ENCODE measurements at regions of chr4 and their contacts with region 1.

Region 1: GRCh38 chr4:82428969-82429727 is 1.1 kb downstream of the HNRNPDL start:
- DNase-seq: peak; percentile 70
- H3K4me3 ChIP-seq: peak overlapping the region; percentile 93
- H3K27ac ChIP-seq: peak overlapping the region; percentile 95
- H3K27me3 ChIP-seq: no peaks in the 10 kb centered on the region
- CTCF ChIP-seq: peak; percentile 67

Region 2: DNA sequence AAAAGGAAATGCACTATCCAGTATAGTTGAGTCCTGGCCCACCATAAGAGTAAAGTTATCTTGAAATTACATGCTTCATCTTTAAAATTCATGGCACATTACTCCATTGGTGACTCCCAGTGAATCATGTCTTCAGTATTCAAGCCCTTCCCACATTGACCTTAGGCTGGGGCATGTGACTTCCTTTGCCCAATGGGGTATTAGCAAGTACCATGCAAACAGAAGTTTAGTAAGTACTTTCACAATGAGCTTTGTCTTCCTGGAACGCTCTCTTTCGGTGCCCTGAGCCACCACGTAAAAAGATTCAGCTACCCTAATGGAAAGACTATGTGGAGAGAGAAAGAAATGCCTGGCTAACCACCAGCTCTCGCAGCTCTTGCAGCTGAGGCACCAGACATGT is 290.8 kb before region 1 on chr4:
- CTCF ChIA-PET with region 1: no interaction called
- POLR2A ChIA-PET with region 1: no interaction called
- DNase-seq: no peak
- H3K4me3 ChIP-seq: no peak overlapping the region
- H3K27ac ChIP-seq: no peak overlapping the region
- H3K27me3 ChIP-seq: no peaks in the 10 kb centered on the region
- CTCF ChIP-seq: no peak

Region 3: GRCh38 chr4:82360298-82361177 is 68.6 kb before region 1 on chr4:
- CTCF ChIA-PET with region 1: interaction called, 10 read pairs
- POLR2A ChIA-PET with region 1: interaction called, 8 read pairs
- DNase-seq: no peak
- H3K4me3 ChIP-seq: no peak overlapping the region
- H3K27ac ChIP-seq: no peak overlapping the region
- H3K27me3 ChIP-seq: no peaks in the 10 kb centered on the region
- CTCF ChIP-seq: peak; percentile 73

Region 4: DNA sequence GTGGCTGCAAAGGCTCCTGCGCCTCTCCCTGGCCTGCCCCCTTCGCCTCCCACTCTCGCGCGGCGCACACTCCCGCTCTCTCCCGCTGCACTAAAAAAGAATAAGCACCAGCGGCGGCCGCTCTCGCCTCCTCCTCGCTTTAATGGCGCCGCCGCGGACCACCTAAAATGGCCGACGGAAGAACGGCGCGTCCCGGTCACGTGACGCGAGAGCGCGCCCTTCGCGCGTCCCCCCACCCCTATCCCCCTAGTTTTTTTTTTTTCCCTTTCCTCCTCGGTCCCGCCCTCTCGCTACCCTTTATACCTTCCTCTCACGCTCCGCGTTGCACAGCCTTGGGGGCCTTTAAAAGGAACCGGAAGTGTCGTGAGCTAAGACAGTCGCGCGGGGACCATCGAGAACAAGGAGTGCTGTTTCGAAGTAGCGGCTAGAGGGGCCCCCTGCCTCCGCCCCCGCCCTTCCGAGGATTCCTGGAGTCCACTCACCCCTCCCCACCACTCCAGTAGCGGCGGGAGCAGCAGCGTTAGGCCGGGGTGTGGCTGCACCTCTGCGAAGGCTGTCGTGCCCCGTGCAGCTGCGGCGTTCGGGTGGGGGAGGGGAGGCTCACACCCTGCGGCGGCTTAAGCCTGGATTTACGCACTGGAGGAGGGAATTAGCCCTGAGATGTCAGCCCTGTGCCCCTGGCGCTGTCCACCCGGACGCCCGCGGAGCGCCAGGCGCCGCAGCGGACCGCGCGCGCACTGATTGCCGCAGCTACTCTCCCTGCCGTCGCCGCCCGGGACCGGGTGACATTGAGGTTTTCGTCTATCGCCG is 55.1 kb before region 1 on chr4 and contains the start of gene HNRNPD:
- CTCF ChIA-PET with region 1: interaction called, 8 read pairs
- POLR2A ChIA-PET with region 1: interaction called, 71 read pairs
- DNase-seq: peak; percentile 99
- H3K4me3 ChIP-seq: peak within 1 kb of the TSS; percentile 98
- H3K27ac ChIP-seq: peak within 1 kb of the TSS; percentile 97
- H3K27me3 ChIP-seq: no peaks in the 10 kb centered on the region
- CTCF ChIP-seq: no peak
- polyA plus RNA-seq, gene HNRNPD: 73.4 and 93.8 TPM in 2 replicates

Region 5: DNA sequence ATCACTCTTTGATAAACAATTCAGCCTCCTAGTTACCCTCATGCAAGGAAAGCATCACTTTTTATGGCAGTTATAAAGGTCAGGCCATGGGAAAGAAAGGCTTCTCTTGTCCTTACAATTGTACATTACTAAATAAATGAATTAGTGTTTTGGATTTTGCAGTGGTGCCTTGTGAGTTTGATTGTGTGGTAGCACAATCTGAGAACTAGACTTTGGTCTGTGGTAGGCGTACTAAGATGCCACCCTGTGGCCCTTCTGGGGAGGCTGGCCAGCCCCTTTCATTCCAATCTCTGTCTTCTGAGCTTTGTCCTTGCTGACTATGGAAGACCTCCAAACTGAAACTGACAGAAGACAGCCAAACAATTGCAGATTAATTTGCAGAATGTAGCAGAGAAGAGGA is 40.7 kb before region 1 on chr4:
- CTCF ChIA-PET with region 1: interaction called, 12 read pairs
- POLR2A ChIA-PET with region 1: interaction called, 4 read pairs
- DNase-seq: no peak
- H3K4me3 ChIP-seq: no peak overlapping the region
- H3K27ac ChIP-seq: no peak overlapping the region
- H3K27me3 ChIP-seq: no peaks in the 10 kb centered on the region
- CTCF ChIP-seq: no peak

Region 6: GRCh38 chr4:82998898-82999297 is 569.8 kb after region 1 on chr4:
- CTCF ChIA-PET with region 1: no interaction called
- POLR2A ChIA-PET with region 1: no interaction called
- DNase-seq: no peak
- H3K4me3 ChIP-seq: no peak overlapping the region
- H3K27ac ChIP-seq: no peak overlapping the region
- H3K27me3 ChIP-seq: no peaks in the 10 kb centered on the region
- CTCF ChIP-seq: no peak

Measured in AG04450 (cell line).